Endothelial cell of umbilical vein (primary cell): ENCODE measurements at regions of chr9 and their contacts with region 1.

Region 1: DNA sequence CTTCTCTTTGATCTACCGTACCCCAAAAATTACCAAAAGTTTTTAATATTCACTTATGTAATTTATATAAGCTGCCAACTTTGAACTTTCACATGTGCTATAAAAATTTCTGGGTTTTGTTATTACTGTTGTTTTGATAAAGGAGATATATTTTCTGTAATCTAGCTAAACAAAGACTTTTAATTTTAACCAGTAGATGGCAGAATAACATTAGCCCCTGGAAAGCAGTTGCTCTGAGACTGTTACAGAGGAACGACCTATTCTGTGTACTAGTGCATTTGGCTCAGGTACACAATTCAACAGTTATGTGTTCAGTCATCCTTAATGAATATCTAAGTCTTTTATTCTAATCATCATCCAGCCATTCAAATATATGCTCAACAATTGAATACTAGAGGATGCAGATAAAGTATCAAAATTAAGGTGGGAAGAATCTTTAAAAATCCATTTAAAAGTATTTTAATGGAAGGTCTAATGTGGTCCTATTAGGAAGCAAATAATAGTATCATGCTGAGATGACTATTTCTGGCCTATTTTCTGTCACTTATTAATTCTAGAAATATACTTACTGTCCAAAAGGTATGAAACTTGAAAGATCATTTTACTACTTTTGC is 8.6 kb downstream of the KLHL9 start:
- DNase-seq: peak; percentile 54
- H3K4me3 ChIP-seq: no peak overlapping the region
- H3K27ac ChIP-seq: no peak overlapping the region
- H3K4me1 ChIP-seq: peaks cover 15% of the 10 kb centered on the region
- H3K27me3 ChIP-seq: no peaks in the 10 kb centered on the region
- CTCF ChIP-seq: peak; percentile 33 to 46
- POLR2A ChIP-seq: no peak

Region 2: DNA sequence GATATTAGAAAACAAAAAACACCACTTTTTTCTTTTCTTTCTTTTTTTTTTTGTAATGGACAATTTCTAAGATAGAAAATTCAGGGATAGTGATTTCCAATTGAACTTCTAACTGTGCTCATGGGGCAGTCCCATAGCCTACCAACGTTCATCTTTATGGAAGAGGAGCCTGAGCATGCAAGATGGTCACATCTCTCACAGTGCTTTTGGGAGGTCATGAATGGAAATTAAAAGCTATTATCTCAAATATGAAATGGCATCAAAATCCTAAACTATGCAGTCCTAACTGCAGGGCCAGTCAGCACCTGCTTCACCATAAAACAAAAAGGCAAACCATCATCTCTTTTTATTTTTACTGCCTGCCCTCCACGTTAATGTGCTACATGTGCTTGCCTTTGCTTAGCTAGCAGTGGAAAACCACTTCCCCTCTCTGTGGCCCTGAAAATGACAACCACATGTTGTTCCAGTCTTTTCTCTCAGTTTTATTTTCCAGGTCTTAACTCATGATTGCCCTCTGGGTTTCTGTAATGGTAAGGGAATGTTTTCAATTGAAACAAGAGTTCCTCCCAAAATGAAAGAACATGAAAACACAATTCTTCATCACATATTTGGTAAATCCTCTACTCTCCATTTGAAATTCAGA is 265.6 kb before region 1 on chr9:
- CTCF ChIA-PET with region 1: no interaction called
- POLR2A ChIA-PET with region 1: no interaction called
- dilution Hi-C with region 1: no loop called
- intact Hi-C with region 1: no loop called
- DNase-seq: no peak
- H3K4me3 ChIP-seq: no peak overlapping the region
- H3K27ac ChIP-seq: no peak overlapping the region
- H3K4me1 ChIP-seq: no peaks in the 10 kb centered on the region
- H3K27me3 ChIP-seq: no peaks in the 10 kb centered on the region
- CTCF ChIP-seq: no peak
- POLR2A ChIP-seq: no peak

Region 3: GRCh38 chr9:21239911-21240310 is 86.7 kb before region 1 on chr9 and contains the start of gene IFNA14:
- CTCF ChIA-PET with region 1: interaction called, 10 read pairs
- POLR2A ChIA-PET with region 1: no interaction called
- dilution Hi-C with region 1: no loop called
- intact Hi-C with region 1: no loop called
- DNase-seq: no peak
- H3K4me3 ChIP-seq: no peak within 1 kb of the TSS
- H3K27ac ChIP-seq: no peak within 1 kb of the TSS
- H3K4me1 ChIP-seq: no peaks in the 10 kb centered on the region
- H3K27me3 ChIP-seq: peaks cover 11 to 28% of the 10 kb centered on the region in 2 experiments
- CTCF ChIP-seq: no peak
- POLR2A ChIP-seq: no peak
- total RNA-seq, gene IFNA14: not detected in 2 replicates

Region 4: DNA sequence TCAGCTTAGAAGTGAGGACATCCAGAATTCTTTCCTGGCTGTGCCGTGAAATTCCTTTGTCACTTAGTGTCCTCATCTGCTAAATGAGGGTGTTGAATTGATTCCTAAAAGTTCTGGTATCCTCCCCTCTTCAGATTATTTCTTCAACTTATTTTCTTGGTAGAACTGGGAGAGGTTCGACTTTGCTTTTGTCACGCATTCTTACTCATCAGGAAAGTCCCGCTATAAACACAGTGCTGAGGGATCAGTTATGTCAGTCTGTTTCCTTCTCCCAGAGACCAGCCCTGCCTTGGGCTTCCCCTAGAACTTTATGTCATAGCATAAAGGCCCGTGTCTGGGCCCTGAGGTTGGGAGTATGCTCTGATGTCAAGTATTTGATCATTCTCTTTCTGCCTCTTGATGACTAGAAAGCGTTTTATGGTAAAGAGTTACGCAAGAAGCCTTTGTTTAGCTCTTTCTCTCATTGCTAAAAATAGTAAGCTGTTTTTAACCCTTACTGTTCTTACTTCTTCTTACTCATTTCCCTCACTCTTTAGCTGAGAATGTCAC is 505.4 kb after region 1 on chr9:
- CTCF ChIA-PET with region 1: no interaction called
- POLR2A ChIA-PET with region 1: no interaction called
- dilution Hi-C with region 1: no loop called
- intact Hi-C with region 1: no loop called
- DNase-seq: peak; percentile 80
- H3K4me3 ChIP-seq: no peak overlapping the region
- H3K27ac ChIP-seq: peak overlapping the region; percentile 84
- H3K4me1 ChIP-seq: peaks cover 32% of the 10 kb centered on the region
- H3K27me3 ChIP-seq: no peaks in the 10 kb centered on the region
- CTCF ChIP-seq: no peak
- POLR2A ChIP-seq: no peak